Sciatic nerve (tissue), 2 donors: ENCODE measurements at regions of chr11 and their contacts with region 1.

Region 1: GRCh38 chr11:15819679-15820286 is 536.6 kb downstream of the SOX6 start:
- DNase-seq: peak; percentile 84
- ATAC-seq: peak; percentile 82

Region 2: DNA sequence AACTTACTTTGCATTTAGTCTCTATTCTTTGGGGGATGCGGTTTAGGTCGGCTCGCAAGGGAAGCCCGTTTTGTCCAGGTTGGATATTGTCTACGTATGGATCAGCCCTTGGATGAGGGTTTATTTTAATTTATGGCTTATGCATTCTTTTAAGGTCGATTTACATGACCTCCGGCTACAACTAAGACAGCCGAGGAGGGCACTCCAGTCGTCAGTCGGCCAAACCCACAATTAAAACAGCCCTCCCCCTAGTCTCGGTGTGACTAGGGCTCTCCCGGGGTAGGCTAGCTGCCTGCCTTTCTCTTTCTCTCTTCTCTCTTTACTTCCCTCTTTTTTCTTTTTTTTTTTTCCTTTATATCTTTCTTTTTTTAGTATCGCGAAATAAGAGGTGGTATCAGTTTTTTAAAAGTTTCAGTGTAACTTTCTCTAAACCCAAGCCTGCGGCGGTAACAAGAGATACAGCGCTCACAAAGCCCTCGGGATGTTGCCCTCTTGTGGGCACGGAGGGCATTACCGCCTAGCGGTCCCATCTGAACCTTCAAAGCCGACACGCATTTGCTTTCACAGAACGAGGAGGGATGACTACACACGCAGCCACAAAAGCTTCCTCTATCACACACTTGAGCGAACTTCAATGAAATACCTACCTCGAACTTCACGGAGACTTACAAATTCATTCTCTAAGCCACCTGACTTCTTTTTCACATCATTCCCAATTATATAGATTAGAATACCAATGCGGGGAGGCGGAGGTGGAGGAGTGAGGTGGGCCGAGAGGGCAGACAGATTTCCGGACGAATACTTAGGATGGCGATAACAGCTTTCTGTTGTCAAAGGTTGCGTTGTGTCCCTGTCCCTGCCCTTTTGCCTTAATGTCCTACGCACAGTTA is 786.4 kb after region 1 on chr11:
- intact Hi-C with region 1: loop called (anchors 10 kb)
- DNase-seq: peak; percentile 95
- ATAC-seq: peak; percentile 84

Region 3: DNA sequence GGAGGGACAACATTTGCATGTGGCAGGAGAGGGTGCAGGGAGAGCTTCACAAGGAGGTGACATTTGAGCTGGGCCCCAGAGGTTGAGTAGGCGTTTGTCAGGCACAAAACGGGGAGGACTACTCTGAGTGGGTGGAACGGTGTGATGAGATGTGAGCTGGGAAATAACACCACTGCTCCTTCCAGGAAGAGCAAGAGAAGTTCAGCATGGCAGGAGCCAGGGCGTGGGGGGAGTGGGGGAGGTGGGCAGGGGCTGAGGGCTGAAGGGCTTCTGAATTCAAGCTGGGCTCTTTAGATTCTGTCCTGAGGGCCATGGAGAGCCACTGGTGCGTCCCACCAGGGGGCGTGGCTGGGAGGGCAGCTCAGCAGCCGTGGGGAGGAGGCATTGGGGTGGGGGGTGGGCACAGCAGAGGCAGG is 1781.5 kb after region 1 on chr11:
- intact Hi-C with region 1: loop called (anchors 10 kb)
- DNase-seq: peak; percentile 12
- ATAC-seq: no peak